GM18951 (cell line): ENCODE measurements at regions of chr7 and their contacts with region 1.

Region 1: DNA sequence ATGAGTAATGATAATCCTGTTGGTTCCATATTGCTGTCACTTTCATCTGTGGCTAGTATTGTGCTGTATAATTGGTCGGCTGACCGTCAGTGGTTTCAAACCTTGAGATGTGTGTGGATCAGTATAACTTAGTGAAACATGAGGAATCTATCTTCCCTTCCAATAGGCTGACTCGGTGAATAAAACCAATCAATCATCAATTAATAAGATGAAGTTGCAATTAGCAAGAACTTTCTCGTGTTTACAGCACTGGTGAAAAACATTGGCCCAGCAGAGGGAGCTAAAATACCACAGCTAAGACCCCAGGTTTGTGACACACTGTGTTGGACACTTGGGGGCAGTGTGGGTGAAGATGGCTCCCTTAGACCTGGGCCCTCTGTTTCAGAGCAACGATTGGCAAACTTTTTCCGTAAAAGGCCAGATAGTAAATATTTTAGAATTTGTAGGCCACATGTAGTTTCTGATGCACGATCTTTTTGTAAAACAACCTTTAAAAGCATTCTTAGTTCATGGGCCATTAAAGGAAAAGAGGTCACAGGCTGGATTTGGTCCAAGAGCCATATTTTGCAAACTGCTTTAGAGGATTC is 47.8 kb downstream of the STRA8 start:
- POLR2A ChIP-seq: no peak

Region 2: DNA sequence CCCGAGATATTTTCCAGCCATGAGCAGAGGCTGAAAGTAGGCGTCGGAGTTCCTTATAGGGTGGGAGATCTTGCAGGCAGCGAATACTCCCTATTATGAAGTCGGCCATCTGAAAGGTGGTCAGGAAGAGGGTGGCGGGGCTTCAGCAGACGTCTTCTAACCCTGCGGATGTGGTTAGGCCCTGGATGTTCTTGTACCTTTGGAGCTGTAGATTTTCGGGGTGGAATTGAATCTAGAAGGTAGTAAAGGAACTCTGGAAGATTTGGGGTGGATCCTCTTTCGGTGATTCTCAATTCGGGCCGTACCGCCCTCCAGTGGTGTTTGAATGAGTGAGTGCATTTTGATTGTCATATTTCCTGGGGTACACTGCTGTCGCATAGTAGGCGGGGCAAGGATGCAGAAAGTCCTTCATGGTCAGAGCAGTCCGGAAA is 276.9 kb after region 1 on chr7:
- in situ Hi-C with region 1: loop called (anchors 10 kb)
- POLR2A ChIP-seq: peak; percentile 13